AG04450 (cell line): ENCODE measurements at regions of chr16 and their contacts with region 1.

Region 1: DNA sequence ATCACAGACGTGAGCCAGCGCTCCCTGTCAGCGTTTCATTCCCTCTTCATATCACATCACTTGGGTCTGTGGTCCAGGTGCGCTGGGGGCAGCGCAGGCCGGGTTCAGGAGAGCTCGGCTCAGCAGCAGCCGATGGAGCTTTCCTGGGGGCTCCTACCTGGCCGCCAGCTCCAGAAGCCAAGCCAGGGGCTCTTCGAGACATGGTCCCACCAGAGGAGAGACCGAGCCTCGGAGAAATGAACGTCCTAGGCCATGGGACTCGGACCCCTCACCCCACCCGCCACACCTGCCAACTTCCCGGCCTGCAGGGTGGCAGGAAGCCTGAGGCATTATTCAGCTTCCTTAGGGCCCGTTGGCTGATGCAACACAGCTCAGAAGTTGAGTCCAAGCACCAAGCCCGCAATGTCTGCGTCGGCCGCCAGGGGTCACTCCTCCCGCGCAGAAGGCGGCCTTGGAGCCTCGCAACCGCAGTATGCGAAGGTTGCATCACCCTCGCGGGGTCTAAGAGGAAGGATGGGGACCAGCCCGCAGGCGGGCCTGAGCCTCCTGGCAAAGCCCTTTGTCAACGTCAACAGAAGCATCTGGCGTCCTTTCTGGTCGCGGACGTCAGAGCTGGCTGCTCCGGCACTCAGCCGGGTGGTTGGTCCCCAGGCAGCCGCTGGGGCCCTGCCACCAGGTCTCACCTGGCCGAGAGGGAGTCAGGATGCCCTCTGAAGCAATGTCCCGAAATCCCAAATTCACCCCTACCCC is 13.2 kb upstream of the KLHDC4 start:
- DNase-seq: peak; percentile 93
- H3K4me3 ChIP-seq: no peak overlapping the region
- H3K27ac ChIP-seq: peak overlapping the region; percentile 93
- H3K27me3 ChIP-seq: no peaks in the 10 kb centered on the region
- CTCF ChIP-seq: peak; percentile 87

Region 2: GRCh38 chr16:87765776-87766484 is 13.1 kb before region 1 on chr16 and contains the start of gene KLHDC4:
- CTCF ChIA-PET with region 1: interaction called, 28 read pairs
- POLR2A ChIA-PET with region 1: interaction called, 5 read pairs
- DNase-seq: peak; percentile 58
- H3K4me3 ChIP-seq: peak within 1 kb of the TSS; percentile 83
- H3K27ac ChIP-seq: peak within 1 kb of the TSS; percentile 86
- H3K27me3 ChIP-seq: no peaks in the 10 kb centered on the region
- CTCF ChIP-seq: no peak
- polyA plus RNA-seq, gene KLHDC4: 9.9 and 11.5 TPM in 2 replicates

Region 3: GRCh38 chr16:87806603-87807546 is 27.9 kb after region 1 on chr16:
- CTCF ChIA-PET with region 1: interaction called, 17 read pairs
- POLR2A ChIA-PET with region 1: interaction called, 8 read pairs
- DNase-seq: peak; percentile 78
- H3K4me3 ChIP-seq: peak overlapping the region; percentile 34
- H3K27ac ChIP-seq: peak overlapping the region; percentile 89
- H3K27me3 ChIP-seq: peaks cover 3% of the 10 kb centered on the region
- CTCF ChIP-seq: no peak

Region 4: GRCh38 chr16:87855852-87856715 is 77.1 kb after region 1 on chr16:
- CTCF ChIA-PET with region 1: interaction called, 10 read pairs
- POLR2A ChIA-PET with region 1: no interaction called
- DNase-seq: no peak
- H3K4me3 ChIP-seq: no peak overlapping the region
- H3K27ac ChIP-seq: peak overlapping the region; percentile 78
- H3K27me3 ChIP-seq: no peaks in the 10 kb centered on the region
- CTCF ChIP-seq: no peak

Region 5: DNA sequence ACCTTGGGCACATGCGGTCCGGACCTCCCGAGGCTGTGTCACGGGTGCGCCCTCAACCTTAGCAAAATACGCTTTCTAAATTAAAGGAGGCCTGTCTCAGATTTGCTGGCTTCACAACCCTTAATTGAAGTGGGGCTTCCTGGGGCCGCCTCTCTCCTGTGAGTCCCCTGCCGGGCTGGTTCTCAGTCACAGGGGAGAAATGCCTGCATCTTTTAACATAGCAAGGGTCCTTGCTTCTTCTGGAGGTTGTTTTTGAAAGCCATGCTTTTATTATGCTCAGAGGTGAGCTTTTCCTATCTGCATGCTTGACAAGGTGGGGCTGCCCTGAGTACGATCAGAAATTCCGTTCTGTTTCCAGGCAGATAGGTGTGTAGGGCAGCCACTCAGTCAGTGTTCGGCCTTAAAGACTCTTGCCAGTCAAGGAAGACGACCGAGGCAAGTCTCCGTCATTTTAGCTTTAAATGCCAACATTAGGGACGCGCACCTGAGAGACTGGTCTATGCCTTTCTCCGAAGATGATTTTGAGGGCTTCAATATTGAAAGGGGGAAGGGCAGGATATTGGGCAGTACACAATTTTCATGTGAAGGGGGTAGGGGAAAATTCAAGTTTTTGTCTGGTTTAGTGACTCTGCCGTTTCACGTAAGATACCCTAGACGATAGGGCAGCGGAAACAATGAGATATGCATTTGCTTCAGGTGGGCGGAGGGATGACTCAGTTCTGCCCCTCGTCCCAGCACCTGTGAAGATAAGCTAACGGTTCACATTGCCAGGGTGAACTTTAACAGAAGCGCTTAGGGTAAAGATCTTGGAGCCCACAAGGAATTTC is 95.8 kb after region 1 on chr16:
- CTCF ChIA-PET with region 1: interaction called, 207 read pairs
- POLR2A ChIA-PET with region 1: interaction called, 21 read pairs
- DNase-seq: no peak
- H3K4me3 ChIP-seq: no peak overlapping the region
- H3K27ac ChIP-seq: no peak overlapping the region
- H3K27me3 ChIP-seq: peaks cover 7% of the 10 kb centered on the region
- CTCF ChIP-seq: no peak